Pancreas (tissue), 10 donors: ENCODE measurements at regions of chr3 and their contacts with region 1.

Region 1: GRCh38 chr3:96677156-96677555 is 137.2 kb upstream of the EPHA6 start:
- DNase-seq: no peak
- ATAC-seq: no peak
- H3K4me3 ChIP-seq: no peak overlapping the region
- H3K27ac ChIP-seq: no peak overlapping the region
- H3K4me1 ChIP-seq: no peaks in the 10 kb centered on the region
- H3K27me3 ChIP-seq: no peaks in the 10 kb centered on the region
- CTCF ChIP-seq: no peak

Region 2: GRCh38 chr3:96756516-96756915 is 79.4 kb after region 1 on chr3:
- intact Hi-C with region 1: loop called in 1 of 3 experiments (anchors 5 kb)
- DNase-seq: no peak
- ATAC-seq: no peak
- H3K4me3 ChIP-seq: no peak overlapping the region
- H3K27ac ChIP-seq: no peak overlapping the region
- H3K4me1 ChIP-seq: no peaks in the 10 kb centered on the region
- H3K27me3 ChIP-seq: no peaks in the 10 kb centered on the region
- CTCF ChIP-seq: no peak

Region 3: DNA sequence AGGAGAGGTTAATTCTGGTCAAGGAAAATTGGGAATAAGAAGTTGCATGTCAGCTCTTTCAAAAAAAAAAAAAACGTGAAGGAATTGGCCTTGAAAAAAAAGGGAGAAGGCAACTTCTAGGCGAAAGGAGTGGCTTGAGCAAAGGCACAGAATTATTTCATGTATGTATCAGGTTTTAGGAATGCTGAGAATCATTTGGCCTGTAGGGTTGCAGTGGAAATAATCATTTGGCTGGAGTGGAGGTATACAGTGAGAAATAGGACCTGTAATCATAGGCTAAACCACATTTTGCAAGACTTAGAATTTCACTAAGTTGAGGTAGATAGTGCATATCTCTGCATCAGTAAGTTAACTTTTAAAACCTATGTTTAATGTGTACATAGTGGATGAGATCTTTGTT is 192.2 kb after region 1 on chr3:
- intact Hi-C with region 1: no loop called
- DNase-seq: no peak
- ATAC-seq: no peak
- H3K4me3 ChIP-seq: no peak overlapping the region
- H3K27ac ChIP-seq: no peak overlapping the region
- H3K4me1 ChIP-seq: no peaks in the 10 kb centered on the region
- H3K27me3 ChIP-seq: no peaks in the 10 kb centered on the region
- CTCF ChIP-seq: no peak